Left cardiac atrium (tissue), 4 donors: ENCODE measurements at regions of chr7 and their contacts with region 1.

Region 1: GRCh38 chr7:131107337-131108211 is 220.1 kb upstream of the MKLN1 start:
- DNase-seq: peak; percentile 76
- ATAC-seq: peak; percentile 45 to 46

Region 2: DNA sequence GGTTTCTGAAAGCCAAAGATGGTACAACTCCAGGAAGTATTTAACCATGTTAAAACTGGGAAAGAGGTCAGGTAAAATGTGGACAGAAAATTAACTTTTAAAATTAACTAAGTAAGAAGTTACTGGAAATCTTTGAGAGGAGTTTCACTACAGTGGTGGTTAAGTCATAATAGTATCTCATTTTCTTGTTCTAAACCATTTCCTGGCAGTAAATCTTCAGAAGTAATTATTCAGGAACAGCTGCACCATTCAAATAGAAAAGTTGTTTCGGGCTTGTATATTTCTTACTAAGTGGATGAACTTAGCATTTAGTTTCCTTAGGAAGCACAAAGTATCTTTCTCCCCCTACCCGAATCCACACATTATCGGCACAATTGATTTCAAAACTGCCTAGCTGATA is 466.1 kb before region 1 on chr7:
- intact Hi-C with region 1: no loop called
- DNase-seq: no peak
- ATAC-seq: no peak

Region 3: DNA sequence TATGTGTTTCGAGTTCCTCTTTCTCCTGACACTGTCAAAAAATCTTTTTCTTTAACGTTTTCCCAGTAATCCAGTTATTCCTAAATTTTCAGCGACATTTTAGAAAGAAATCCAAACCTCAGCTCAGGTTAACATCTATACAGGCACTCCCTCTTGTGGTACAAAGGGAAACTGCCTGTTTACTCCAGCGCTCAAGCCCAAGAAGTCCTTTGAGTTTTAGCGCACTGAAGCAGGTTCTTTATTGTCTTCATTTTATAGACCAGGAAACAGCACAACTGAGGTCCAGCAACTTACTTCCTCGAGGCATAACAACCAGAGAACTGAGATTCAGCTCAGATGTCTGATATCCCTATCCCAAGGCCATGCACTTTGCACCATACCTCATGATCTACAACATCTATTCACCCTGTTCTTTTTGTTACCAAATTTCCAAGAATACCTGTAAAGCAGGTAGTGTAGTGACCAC is 67.1 kb before region 1 on chr7:
- intact Hi-C with region 1: no loop called
- DNase-seq: no peak
- ATAC-seq: peak; percentile 67 to 75

Region 4: DNA sequence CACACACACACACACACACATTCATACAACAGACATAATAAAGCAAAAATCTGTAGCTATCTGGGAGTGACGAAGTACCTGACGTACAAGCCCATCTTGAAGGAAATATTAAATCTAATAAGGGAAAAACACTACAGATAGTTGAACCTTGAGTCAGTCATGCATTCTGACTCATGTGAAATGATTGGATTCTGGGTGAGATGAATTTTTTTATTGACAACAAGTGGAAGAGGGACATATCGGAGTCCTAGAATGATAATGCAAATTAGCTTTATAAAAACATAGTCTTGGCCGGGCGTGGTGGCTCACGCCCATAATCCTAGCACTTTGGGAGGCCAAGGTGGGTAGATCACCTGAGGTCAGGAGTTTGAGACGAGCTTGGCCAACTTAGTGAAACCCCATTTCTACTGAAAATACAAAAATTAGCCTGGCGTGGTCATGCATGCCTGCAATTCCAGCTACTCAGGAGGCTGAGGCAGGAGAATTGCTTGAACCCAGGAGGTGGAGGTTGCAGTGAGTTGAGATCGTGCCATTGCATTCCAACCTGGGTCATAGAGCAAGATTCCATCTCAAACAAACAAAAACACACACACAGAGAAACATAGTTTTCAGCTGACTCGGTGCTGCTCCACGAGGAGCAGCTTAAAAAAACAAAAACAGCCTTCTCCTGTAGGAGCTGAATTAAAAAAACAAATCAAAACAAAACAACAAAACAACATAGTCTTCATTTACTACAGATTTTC is 65.7 kb after region 1 on chr7:
- intact Hi-C with region 1: no loop called
- DNase-seq: no peak
- ATAC-seq: no peak

Region 5: GRCh38 chr7:131188367-131189339 is 81.1 kb after region 1 on chr7:
- intact Hi-C with region 1: loop called in 1 of 2 experiments (anchors 10 kb)
- DNase-seq: peak; percentile 25
- ATAC-seq: peak; percentile 47 to 72

Region 6: GRCh38 chr7:131284702-131285419 is 177.3 kb after region 1 on chr7:
- intact Hi-C with region 1: loop called in 1 of 2 experiments (anchors 5 kb)
- DNase-seq: peak; percentile 84
- ATAC-seq: peak; percentile 70 to 84